ENCODE measurements at regions of chr17 and their contacts with region 1.

Region 1: DNA sequence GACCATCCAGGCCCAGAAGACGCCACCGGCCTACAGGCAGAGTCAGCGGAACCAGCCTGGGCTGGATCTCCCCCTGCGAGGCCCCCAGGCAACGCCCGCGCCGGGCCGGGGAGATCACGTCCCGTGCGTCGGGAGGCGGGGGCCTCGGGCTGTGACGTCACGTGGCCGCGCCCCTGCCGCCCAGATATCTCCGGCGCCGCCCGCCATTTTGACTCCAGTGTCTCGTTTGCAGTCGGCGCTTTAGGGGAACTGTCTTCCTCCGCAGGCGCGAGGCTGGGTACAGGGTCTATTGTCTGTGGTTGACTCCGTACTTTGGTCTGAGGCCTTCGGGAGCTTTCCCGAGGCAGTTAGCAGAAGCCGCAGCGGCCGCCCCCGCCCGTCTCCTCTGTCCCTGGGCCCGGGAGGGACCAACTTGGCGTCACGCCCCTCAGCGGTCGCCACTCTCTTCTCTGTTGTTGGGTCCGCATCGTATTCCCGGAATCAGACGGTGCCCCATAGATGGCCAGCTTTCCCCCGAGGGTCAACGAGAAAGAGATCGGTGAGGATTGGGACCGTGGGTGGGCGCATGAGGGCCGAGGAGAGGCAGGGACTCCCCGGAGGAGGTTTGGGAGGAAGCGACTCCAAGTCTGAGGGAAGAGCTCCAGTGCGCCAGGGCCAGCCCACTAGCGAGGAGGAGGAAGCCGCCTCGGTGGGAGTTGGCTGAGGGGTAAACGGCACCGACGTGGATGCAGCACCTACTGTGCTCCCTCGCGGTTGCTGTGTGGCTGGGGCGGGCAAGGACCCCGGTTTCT is at the start of gene WSB1:
- H3K4me3 ChIP-seq: peak within 1 kb of the TSS; percentile 75
- H3K27ac ChIP-seq: peak within 1 kb of the TSS; percentile 94
- H3K4me1 ChIP-seq: peaks cover 6% of the 10 kb centered on the region
- CTCF ChIP-seq: peak; percentile 76

Region 2: DNA sequence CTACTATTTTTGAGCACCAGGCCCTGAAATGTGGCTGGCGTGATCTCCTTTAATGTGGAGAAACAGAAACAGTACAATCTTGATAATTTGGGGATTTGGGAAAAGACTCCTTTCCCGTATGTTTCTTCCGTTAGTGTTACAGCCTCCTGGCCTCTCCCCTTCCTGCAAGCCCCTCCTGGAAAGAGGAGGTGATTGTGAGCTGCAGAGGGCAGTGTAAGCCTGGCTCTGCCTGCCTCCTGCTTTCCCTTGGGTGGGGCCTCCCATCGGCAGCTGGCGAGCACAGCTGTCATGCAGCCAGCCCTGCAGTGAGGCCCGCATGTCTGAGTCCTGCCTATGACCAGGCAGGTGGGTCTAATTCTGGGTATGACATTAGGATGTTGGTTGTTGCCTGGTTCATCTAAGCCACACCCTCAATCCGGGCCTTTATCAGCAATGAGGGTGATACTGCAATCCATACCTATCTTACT is 48.8 kb before region 1 on chr17:
- CTCF ChIA-PET with region 1: interaction called, 9 read pairs
- POLR2A ChIA-PET with region 1: interaction called, 38 read pairs
- H3K4me3 ChIP-seq: no peak overlapping the region
- H3K27ac ChIP-seq: no peak overlapping the region
- H3K4me1 ChIP-seq: peaks cover 7% of the 10 kb centered on the region; the same call in 1 of the 2 replicates
- CTCF ChIP-seq: peak; percentile 90

Region 3: DNA sequence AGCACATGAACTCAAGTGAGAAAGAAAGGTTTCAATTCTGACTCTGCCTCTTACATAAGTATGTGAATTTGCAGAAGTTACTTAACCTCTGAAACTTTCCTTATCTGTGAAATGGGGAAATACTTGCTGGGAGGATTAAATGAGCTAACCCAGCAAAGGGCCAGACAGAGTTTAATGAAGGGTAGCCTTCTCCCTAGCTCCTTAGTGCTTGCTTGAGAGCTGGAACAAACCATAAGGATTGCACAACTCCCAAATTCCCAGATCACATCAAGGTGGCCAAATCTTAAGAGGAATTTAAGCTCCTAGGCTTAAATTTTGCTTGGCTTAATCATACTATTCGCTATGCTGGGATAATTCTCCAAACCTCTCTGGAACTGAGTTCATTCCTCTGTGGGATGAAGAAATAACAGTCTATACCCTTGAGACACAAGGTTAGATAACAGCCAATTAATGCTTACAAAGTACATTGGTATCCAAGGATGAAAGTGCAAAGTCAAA is 12.0 kb before region 1 on chr17:
- CTCF ChIA-PET with region 1: interaction called, 5 read pairs
- POLR2A ChIA-PET with region 1: interaction called, 21 read pairs
- H3K4me3 ChIP-seq: no peak overlapping the region
- H3K27ac ChIP-seq: no peak overlapping the region
- H3K4me1 ChIP-seq: no peaks in the 10 kb centered on the region
- CTCF ChIP-seq: no peak

Region 4: DNA sequence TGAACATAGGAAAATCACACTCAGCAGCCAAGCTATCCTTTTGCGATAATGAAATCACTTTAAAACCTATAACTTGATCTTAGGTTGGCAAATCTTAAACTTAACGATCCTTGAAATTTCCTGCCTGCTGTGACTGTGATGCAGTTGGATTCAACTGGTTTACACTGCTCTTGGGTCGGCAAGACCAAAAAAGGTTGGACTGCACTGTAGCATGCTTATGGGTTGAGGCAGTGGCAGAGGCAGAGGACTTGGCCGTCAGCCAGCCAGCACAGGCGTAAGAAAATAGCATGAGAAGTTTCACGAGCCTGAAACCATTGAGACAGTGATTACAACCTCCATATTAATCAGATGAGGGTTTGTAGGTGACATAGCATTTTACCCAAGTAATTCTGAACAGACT is 21.2 kb after region 1 on chr17:
- CTCF ChIA-PET with region 1: interaction called, 6 read pairs
- POLR2A ChIA-PET with region 1: interaction called, 26 read pairs
- H3K4me3 ChIP-seq: no peak overlapping the region
- H3K27ac ChIP-seq: peak overlapping the region; percentile 66
- H3K4me1 ChIP-seq: peaks cover 13% of the 10 kb centered on the region
- CTCF ChIP-seq: no peak

Region 5: DNA sequence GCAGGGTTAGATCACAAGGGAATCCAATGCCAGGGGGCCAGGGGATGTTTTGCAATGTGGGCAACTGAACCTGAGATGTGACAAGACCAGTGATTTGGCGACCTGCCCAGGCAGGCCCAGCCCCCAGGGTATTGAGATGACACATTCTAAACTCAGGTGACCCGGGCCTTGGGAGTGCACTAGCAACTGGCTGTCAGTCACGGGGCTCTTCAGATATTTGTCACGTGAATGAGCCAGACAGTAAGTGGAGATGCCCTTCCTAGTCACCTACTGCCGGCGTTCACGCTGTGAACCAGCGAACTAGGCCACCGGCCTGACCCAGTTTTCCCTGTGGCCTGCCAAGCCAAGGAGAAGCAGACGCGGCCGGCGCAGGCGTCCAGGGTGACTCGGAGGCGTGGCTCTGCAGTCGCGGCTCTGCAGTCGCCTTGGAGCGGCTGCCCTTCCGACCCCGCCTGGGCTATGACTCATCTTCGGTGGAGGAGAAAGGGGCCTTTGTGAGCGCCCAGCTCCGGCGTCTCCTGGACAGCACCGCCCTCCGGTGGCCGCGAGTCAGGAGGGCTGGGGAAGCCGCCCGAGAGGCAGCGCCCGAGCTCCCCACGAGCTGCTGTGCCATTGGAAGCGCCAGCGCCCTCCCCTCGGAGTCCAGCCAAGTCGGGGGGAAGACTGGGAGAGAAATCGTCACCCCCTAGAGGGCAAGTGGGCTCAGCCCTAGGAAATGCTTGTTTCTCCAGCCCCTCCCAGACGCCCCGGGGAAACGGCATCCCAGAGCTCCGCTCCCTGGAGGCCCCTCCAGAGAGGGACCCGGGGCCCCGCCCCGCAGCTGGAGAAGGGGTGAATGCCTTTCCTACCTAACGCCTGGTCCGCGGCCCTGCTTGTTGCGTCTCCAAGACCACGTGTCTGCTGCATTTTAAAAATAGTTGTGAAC is 38.7 kb after region 1 on chr17:
- CTCF ChIA-PET with region 1: interaction called, 8 read pairs
- POLR2A ChIA-PET with region 1: interaction called, 39 read pairs
- H3K4me3 ChIP-seq: peak overlapping the region; percentile 48
- H3K27ac ChIP-seq: peak overlapping the region; percentile 84
- H3K4me1 ChIP-seq: peaks cover 2% of the 10 kb centered on the region; the same call in 1 of the 2 replicates
- CTCF ChIP-seq: peak; percentile 99

Measured in HEK293 (cell line).